Activated naive CD4-positive, alpha-beta T cell treated with anti-CD3 and anti-CD28 coated beads, Interleukin-2, amount 10 ng/mL, durations not matched to agents 7 days and 5 days (primary cell): ENCODE measurements at regions of chr5 and their contacts with region 1.

Region 1: DNA sequence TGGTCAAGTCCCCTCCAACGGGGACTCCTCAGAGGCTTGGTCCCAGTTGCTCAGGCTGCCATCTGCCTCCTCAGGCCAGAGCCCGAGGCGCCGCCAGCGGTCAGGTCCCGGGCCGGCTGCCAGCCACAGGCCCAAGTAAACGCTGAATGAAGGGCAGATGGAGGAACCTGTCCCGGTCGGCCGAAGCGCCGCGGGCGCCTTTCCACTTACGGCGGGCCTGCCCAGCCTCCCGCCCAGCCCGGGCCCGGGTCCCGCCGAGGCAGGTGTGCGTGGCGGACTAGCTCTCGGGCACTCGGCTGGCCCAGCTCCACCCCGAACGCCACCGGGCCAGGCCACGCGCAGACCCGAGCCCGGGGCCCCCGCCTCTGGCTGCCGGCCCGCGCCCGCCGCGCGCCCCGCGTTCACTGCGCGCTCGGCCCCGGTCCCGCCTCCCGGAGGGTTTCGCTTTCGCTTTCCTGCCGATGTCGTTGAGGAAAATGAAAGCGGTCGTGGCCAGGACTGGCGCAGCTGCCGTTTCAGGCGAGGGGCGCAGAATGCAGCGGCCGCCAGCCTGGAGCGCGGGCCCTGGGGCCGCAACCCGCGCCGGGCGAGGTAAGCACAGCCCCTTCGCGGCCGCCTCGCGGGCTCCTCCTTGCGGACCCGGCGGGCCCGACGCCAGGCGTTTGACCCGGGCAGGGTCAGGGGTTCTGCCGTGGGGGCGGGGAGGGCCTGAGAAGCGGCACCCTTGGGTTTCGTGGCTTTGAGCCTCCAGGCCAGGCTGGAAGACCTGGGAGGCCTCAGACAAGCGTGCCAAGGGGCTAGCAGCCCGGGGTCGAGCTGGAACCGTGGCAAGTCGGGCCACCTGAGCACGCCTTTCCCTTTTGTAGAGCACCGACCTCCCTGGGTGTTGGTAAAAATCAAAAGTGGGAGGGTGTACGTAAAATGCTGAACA is 41.2 kb downstream of the SLC22A5 start:
- DNase-seq: peak; percentile 94
- H3K4me3 Mint-ChIP-seq: peak overlapping the region; percentile 97
- H3K27ac Mint-ChIP-seq: peak overlapping the region; percentile 100
- H3K4me1 Mint-ChIP-seq: peaks cover 70% of the 10 kb centered on the region
- H3K27me3 Mint-ChIP-seq: no peaks in the 10 kb centered on the region

Region 2: DNA sequence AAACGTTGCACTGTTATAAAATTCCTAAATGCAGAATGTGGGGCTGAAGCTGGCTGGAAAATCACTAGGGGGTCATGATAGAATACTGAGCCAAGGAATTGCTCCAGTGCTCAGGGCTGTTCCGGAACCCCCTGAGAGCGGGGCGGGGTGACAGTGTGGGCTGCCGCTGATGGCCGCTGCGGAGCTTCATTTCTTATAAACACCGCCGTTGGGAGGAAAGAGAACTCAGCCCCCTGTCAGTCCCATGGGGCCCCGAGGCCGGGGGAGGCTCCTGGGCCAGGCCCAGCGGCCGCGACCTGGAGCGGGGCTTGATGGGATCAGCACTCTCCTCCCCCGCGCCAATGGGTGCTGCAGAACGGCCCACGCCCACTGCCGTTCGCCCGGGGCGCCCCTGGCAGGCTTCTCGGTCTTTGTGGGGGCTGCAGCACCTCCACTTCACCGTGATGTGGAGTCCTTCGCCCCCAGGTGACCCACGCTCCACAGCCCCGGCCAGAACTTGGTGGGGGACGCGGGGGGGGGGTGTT is 85.0 kb after region 1 on chr5:
- CTCF ChIA-PET with region 1: interaction called, 16 read pairs
- DNase-seq: peak; percentile 86
- H3K4me3 Mint-ChIP-seq: peak overlapping the region; percentile 95
- H3K27ac Mint-ChIP-seq: peak overlapping the region; percentile 99
- H3K4me1 Mint-ChIP-seq: peaks cover 77% of the 10 kb centered on the region
- H3K27me3 Mint-ChIP-seq: no peaks in the 10 kb centered on the region

Region 3: DNA sequence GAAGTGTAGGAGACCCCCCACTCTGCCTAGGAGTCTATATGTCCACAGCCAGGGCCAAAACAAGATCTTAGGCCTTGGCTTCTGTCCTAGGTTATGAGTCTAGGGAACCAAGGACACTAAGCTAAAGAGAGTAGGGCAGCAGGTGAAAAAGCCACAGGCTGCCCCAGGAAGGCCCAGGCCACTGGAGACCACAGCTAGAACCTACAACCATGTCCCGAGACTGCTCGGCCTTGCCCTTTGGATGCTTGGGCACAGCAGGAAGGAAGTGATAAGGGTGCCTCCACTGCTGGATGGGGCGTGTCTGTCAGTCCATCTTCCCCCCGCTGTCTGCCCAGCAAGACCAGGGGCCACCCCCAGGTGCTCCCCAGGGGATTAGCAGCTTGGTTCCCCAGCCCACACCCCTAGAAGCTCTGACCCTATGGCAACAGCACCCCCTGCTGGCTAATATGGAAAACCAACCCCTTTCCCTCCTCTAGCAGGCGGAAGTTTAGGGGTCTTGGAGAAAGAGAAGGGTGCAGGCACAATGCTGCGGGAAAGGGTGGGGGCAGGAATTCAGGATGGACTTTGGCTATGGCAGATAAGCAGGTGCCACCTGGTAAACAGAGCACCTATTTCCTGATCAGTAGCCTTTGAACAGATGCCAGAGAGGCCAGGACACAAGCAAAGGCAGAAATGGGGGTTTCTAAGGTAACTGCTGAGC is 90.4 kb after region 1 on chr5:
- CTCF ChIA-PET with region 1: interaction called, 16 read pairs
- DNase-seq: peak; percentile 83
- H3K4me3 Mint-ChIP-seq: no peak overlapping the region
- H3K27ac Mint-ChIP-seq: peak overlapping the region; percentile 12
- H3K4me1 Mint-ChIP-seq: peaks cover 39% of the 10 kb centered on the region
- H3K27me3 Mint-ChIP-seq: peaks cover 24% of the 10 kb centered on the region

Region 4: DNA sequence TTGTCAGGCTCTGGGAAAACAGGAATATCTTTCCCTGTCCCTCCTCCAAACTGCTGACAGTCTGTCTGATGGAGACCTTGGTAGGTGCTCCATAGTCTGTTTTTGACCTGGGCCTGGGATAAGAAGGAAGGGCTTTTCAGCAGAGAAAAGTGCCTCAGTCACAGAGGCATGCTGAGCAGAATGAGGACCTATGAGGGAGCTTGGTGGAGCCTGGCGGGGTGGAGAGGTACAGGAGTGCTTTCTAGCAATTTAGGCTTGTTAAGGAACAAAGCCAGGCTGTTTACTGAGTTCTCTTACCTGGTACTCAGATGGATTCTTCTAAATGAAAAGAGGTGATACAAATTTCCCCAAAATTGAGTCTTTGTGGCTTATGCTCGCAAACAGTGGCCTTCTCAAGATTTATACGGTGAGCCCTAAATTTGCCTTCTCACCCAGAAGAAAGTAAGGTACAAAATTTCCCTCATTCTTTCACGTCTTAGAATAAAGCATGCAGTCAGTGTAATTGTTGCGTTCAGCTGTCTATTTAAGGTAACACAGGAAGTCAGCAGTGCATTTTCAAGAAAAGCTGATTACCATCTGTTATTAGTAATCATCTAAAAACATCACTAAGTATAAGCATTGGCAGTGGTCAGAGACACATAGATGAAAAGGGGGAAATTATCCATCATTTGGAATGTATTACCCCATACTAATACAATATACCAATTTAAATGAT is 218.7 kb after region 1 on chr5:
- CTCF ChIA-PET with region 1: no interaction called
- DNase-seq: no peak
- H3K4me3 Mint-ChIP-seq: no peak overlapping the region
- H3K27ac Mint-ChIP-seq: peak overlapping the region; percentile 38
- H3K4me1 Mint-ChIP-seq: peaks cover 10% of the 10 kb centered on the region
- H3K27me3 Mint-ChIP-seq: no peaks in the 10 kb centered on the region